ENCODE measurements at regions of chr11 and their contacts with region 1.

Region 1: GRCh38 chr11:128157423-128158298 is 429.7 kb downstream of the ETS1 start:
- DNase-seq: peak; percentile 67
- H3K4me3 ChIP-seq: peak overlapping the region in 2 of 3 experiments; percentile 13 to 26
- H3K27ac ChIP-seq: peak overlapping the region; percentile 11
- H3K4me1 ChIP-seq: no peaks in the 10 kb centered on the region
- H3K27me3 ChIP-seq: no peaks in the 10 kb centered on the region
- CTCF ChIP-seq: peak; percentile 73 to 76

Region 2: GRCh38 chr11:127843483-127844396 is 313.9 kb before region 1 on chr11:
- CTCF ChIA-PET with region 1: no interaction called
- dilution Hi-C with region 1: no loop called
- in situ Hi-C with region 1: no loop called
- intact Hi-C with region 1: loop called (anchors 2 kb)
- DNase-seq: peak; percentile 64
- H3K4me3 ChIP-seq: no peak overlapping the region
- H3K27ac ChIP-seq: no peak overlapping the region
- H3K4me1 ChIP-seq: peaks cover 12% of the 10 kb centered on the region
- H3K27me3 ChIP-seq: no peaks in the 10 kb centered on the region
- CTCF ChIP-seq: peak; percentile 80 to 82

Region 3: GRCh38 chr11:128180446-128181087 is 22.9 kb after region 1 on chr11:
- CTCF ChIA-PET with region 1: no interaction called
- dilution Hi-C with region 1: no loop called
- in situ Hi-C with region 1: no loop called
- intact Hi-C with region 1: no loop called
- DNase-seq: peak; percentile 89
- H3K4me3 ChIP-seq: no peak overlapping the region
- H3K27ac ChIP-seq: peak overlapping the region; percentile 45
- H3K4me1 ChIP-seq: peaks cover 22% of the 10 kb centered on the region
- H3K27me3 ChIP-seq: no peaks in the 10 kb centered on the region
- CTCF ChIP-seq: no peak

Region 4: GRCh38 chr11:128235958-128236357 is 78.3 kb after region 1 on chr11:
- CTCF ChIA-PET with region 1: no interaction called
- dilution Hi-C with region 1: no loop called
- in situ Hi-C with region 1: no loop called
- intact Hi-C with region 1: no loop called
- DNase-seq: no peak
- H3K4me3 ChIP-seq: no peak overlapping the region
- H3K27ac ChIP-seq: no peak overlapping the region
- H3K4me1 ChIP-seq: no peaks in the 10 kb centered on the region
- H3K27me3 ChIP-seq: no peaks in the 10 kb centered on the region
- CTCF ChIP-seq: no peak

Region 5: GRCh38 chr11:128497061-128497775 is 339.6 kb after region 1 on chr11:
- CTCF ChIA-PET with region 1: no interaction called
- dilution Hi-C with region 1: no loop called
- in situ Hi-C with region 1: loop called in 1 of 2 experiments (anchors 25 kb)
- intact Hi-C with region 1: no loop called
- DNase-seq: peak; percentile 90
- H3K4me3 ChIP-seq: peak overlapping the region; percentile 2 to 25 (median 18)
- H3K27ac ChIP-seq: peak overlapping the region; percentile 82
- H3K4me1 ChIP-seq: peaks cover 72% of the 10 kb centered on the region
- H3K27me3 ChIP-seq: no peaks in the 10 kb centered on the region
- CTCF ChIP-seq: no peak

Region 6: GRCh38 chr11:128643661-128644317 is 486.1 kb after region 1 on chr11:
- CTCF ChIA-PET with region 1: no interaction called
- dilution Hi-C with region 1: loop called (anchors 5 kb)
- in situ Hi-C with region 1: loop called in 1 of 2 experiments (anchors 10 kb)
- intact Hi-C with region 1: no loop called
- DNase-seq: no peak
- H3K4me3 ChIP-seq: no peak overlapping the region
- H3K27ac ChIP-seq: no peak overlapping the region
- H3K4me1 ChIP-seq: no peaks in the 10 kb centered on the region
- H3K27me3 ChIP-seq: no peaks in the 10 kb centered on the region
- CTCF ChIP-seq: no peak

Region 7: DNA sequence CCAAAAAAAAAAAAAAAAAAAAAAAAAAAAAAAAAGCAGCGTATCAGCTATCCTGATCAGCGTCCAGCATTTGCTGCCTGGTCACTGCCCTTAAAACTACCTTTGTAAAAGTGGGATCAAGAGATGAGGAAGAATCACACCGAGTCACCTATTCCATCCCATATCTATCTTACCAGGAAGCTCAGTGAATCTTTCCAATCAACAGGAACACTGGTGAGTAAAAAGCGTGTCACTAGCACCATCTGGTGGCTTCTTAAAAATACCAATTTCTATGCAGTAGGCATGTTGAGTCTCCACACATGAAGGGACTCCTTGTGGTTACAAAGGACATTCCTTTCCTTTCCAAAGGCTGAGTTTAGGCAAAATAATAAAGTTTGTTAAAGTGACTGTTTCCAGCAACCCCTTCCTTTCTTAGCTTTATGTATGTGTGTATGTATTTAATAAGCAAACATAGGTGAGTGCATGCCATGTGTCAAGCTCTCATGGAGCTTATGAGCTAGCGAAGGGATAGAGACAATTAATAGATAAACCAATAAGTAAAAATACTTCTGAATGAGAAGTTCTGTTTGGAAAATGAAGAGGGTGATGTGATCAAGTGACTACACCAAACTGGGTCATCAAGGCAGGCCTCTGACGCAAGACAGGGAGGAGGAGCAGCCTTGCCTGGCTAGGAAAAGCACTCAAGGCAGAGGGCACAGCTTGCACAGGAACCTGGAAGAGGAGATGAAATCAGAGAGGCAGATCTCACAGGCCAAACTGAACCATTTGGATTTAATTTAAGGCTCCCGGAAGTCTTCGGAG is 798.9 kb after region 1 on chr11:
- CTCF ChIA-PET with region 1: no interaction called
- dilution Hi-C with region 1: no loop called
- in situ Hi-C with region 1: no loop called
- intact Hi-C with region 1: loop called (anchors 5 kb)
- DNase-seq: peak; percentile 64
- H3K4me3 ChIP-seq: no peak overlapping the region
- H3K27ac ChIP-seq: no peak overlapping the region
- H3K4me1 ChIP-seq: peaks cover 6% of the 10 kb centered on the region
- H3K27me3 ChIP-seq: no peaks in the 10 kb centered on the region
- CTCF ChIP-seq: peak; percentile 65 to 73